ENCODE measurements at regions of chr7 and their contacts with region 1.

Region 1: DNA sequence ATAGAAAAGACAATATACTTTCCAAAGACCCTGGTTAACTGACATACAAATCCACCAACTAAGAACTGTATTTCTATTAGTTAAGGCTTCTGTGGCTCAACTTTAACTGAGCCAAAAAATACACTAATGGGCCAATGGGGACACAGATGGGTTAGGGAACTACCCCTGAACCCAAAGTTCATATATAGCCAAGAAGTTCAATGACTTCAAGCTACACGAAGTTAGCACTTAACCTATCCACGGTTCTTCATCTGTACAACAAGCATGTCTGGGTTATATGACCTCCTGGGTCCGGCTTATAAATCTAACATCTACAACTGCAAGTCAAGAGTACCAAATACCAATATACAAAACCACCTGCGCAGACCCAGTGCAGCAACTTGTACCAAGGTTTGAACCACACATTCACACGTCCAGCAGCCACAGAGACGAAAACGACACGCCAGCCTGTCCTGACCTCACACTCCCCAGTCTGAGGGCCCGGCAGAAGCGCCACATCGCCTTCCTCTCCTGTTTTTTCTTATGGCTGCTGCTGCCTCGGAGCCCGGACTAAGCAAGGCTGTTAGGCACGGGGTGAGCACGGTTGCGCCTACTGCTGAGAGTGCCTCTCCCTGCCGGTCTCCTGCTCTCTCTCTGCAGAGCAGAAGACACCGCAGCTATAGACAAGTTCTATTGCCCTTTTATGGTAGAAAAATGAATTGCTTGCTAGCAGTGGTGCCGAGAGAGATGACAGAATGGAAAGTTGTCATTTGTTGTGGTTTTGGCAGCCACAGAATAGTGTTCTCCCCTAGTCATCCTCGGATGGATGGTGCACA is 86.3 kb downstream of the RNF216 start:
- DNase-seq: peak; percentile 87
- ATAC-seq: peak; percentile 75
- H3K4me3 Mint-ChIP-seq: peak overlapping the region; percentile 86
- H3K27ac Mint-ChIP-seq: peak overlapping the region; percentile 95
- H3K4me1 Mint-ChIP-seq: peaks cover 98% of the 10 kb centered on the region
- H3K27me3 Mint-ChIP-seq: no peaks in the 10 kb centered on the region
- CTCF ChIP-seq: no peak

Region 2: DNA sequence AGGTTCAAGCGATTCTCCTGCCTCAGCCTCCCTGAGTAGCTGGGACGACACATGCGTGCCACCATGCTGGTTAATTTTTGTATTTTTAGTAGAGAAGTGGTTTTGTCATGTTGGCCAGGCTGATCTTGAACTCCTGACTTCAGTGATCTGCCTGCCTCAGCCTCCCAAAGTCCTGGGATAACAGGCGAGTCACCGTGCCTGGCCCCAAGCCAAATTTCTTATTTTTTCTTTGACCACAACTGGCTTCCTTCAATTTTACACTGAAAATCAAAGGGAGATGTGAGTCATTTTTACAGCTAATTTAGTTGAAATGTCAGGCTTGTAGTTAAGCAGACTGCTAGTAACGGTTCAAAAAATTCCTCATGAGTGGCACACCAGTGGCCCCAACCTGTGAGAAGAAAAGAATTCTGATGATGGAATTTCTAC is 78.6 kb after region 1 on chr7:
- CTCF ChIA-PET with region 1: interaction called, 5 read pairs
- POLR2A ChIA-PET with region 1: interaction called, 3 read pairs
- intact Hi-C with region 1: loop called (anchors 10 kb)
- DNase-seq: peak; percentile 69
- ATAC-seq: peak; percentile 25
- H3K4me3 Mint-ChIP-seq: peak overlapping the region; percentile 62
- H3K27ac Mint-ChIP-seq: peak overlapping the region; percentile 89
- H3K4me1 Mint-ChIP-seq: peaks cover 71% of the 10 kb centered on the region
- H3K27me3 Mint-ChIP-seq: no peaks in the 10 kb centered on the region
- CTCF ChIP-seq: no peak

Measured in activated CD8-positive, alpha-beta T cell treated with anti-CD3 and anti-CD28 coated beads for 36 hours (primary cell).